ENCODE measurements at regions of chr11 and their contacts with region 1.

Region 1: GRCh38 chr11:17978553-17979287 is 34.1 kb downstream of the SERGEF start:
- DNase-seq: peak; percentile 11
- H3K4me3 ChIP-seq: no peak overlapping the region
- H3K27ac ChIP-seq: no peak overlapping the region
- H3K4me1 ChIP-seq: no peaks in the 10 kb centered on the region
- H3K27me3 ChIP-seq: no peaks in the 10 kb centered on the region
- CTCF ChIP-seq: peak; percentile 24 to 62 (median 56)
- POLR2A ChIP-seq: no peak

Region 2: DNA sequence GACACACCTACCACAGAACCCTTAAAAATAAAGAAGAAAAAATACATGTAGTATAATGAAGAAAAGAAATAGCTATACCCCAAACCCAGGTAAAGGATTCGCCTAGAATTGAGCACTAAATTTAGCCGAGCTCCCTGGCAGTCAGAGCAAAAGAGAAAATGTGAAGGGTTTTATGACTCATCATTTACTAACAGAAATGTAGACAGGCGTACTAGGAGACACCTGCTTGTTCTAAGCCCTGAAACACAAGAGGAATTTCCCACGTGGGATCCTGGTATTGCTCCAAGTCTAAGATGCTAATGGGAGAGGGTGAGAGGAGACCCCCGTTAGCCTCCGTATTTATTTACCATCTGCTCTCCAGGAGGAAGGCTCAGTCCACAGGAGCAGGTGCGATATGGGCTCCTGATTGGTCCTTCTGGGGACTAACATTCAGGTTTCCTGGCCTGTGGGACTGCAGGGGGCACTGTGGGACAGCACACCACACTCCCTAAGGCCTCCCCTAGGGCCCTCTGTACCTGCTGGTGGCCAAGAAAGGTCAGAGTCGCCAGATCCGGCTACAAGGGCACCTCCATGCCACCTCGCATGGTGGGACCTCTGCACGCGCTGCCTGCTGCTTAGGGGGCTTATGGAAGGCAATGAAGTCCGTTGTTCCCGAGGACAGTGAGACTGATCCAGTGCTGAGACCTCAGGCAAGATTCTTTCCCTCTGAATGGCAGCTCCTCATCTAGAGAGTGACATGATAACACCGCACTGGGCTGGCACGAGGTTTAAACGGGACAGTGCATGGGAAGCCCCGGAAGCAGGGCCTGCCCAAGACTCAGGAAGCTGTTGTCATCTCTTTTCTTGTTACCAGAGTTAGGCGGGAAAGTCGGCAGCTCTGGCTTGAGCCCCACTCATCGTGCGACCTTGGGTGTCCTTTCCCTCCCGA is 218.4 kb before region 1 on chr11:
- intact Hi-C with region 1: loop called (anchors 10 kb)
- DNase-seq: peak; percentile 17
- H3K4me3 ChIP-seq: no peak overlapping the region
- H3K27ac ChIP-seq: no peak overlapping the region
- H3K4me1 ChIP-seq: no peaks in the 10 kb centered on the region
- H3K27me3 ChIP-seq: no peaks in the 10 kb centered on the region
- CTCF ChIP-seq: peak in 3 of 4 experiments; percentile 43 to 65 (median 58)
- POLR2A ChIP-seq: no peak

Region 3: GRCh38 chr11:17864478-17864941 is 114.2 kb before region 1 on chr11:
- intact Hi-C with region 1: no loop called
- DNase-seq: no peak
- H3K4me3 ChIP-seq: no peak overlapping the region
- H3K27ac ChIP-seq: no peak overlapping the region
- H3K4me1 ChIP-seq: no peaks in the 10 kb centered on the region
- H3K27me3 ChIP-seq: no peaks in the 10 kb centered on the region
- CTCF ChIP-seq: peak in 3 of 4 experiments; percentile 7 to 28 (median 19)
- POLR2A ChIP-seq: no peak